ENCODE measurements at regions of chr7 and their contacts with region 1.

Region 1: GRCh38 chr7:155598810-155599210 is 45.7 kb upstream of the RBM33 start:
- DNase-seq: peak; percentile 89
- ATAC-seq: peak; percentile 50

Region 2: DNA sequence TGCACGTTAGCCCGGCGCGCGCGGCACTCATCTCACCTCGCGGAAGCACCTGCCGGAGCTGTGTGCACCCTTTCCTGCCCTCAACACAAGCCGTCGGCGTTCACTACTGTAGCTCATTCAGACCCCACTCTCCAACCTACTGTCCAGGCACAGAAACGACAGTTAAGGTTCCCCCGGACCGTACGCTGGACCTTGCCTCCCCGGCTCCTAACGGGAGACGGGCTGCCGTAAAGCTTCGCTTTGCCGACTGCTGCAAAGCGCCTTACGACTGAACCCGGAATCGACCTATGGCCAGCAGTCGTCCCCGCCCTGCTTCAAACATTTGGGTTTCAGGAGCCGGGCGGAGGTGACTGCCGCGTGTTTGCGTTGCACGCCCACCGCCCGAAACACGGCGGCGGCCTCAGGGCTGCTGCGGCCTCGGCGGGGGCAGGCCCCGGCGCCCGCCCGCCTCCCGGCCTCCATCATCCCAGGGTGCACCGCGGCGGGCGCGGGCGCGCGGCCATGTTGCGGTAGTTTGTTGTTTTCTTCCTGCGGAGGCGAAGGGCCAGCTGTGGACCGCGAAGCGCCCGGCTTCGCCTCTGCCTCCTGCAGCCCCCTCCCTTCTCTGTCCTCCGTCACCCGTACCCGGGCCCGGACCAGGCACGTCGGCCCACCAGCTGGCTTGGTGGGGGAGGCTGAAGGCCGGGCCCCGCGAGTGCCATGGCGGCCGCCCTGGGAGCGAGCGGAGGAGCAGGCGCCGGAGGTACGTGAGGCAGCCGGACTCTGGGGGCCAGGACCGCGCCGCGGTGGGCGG is 45.6 kb after region 1 on chr7 and contains the start of gene RBM33:
- intact Hi-C with region 1: loop called (anchors 5 kb)
- DNase-seq: peak; percentile 93
- ATAC-seq: peak; percentile 92
- total RNA-seq, gene RBM33: 36.1 TPM

Region 3: GRCh38 chr7:155738652-155739537 is 140.1 kb after region 1 on chr7:
- intact Hi-C with region 1: loop called (anchors 2 kb)
- DNase-seq: peak; percentile 88
- ATAC-seq: peak; percentile 67

Region 4: GRCh38 chr7:155769701-155770100 is 170.9 kb after region 1 on chr7:
- intact Hi-C with region 1: loop called (anchors 2 kb)
- DNase-seq: no peak
- ATAC-seq: no peak

Measured in Right ventricle myocardium inferior (tissue), 1 donor.